ENCODE measurements at regions of chr5 and their contacts with region 1.

Region 1: DNA sequence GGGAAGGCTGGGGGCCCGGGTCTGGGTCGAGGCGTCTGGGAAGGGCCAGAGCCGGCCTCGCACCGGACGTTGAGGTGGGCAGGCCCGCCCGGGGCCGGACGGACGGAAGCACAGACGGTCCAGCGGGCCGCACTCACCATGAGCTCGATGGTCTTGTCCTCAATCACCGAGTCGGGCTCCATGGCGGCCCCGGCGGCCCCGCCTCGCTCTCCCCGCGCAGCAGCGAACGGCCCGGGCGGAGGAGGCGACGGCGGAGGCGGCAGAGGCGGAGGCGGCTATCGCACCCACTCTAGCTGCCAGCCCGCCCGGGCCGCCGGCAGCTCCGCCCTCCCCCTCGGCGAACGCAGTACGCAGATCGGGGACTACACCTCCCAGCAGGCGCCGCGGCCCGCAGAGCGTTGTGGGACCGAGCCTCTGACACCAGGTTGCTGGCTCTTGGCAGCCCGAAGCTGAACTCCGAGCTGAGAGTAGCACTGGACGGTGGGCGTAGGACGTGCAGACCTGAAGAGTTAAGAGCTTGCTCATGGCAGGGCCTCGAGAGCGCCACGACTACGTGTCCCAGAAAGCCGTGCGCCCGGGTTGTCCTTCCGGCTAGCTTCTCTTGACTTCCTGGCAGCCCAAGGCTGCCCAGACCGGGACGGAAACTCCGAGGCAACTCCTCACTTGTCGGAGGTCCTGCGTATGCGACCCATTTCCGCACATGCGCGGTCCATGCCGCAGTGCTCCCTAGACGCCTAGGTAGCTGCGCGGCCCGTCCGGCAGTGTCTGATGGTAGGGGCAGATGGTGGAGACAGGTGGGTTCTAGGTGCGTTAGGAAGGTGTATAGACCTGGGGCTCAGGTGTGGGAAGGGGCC is at the start of gene FBXW11:
- DNase-seq: peak; percentile 97
- ATAC-seq: peak; percentile 90
- H3K4me3 Mint-ChIP-seq: peak within 1 kb of the TSS; percentile 86
- H3K27ac Mint-ChIP-seq: peak within 1 kb of the TSS; percentile 96
- H3K4me1 Mint-ChIP-seq: peaks cover 47% of the 10 kb centered on the region
- H3K27me3 Mint-ChIP-seq: no peaks in the 10 kb centered on the region
- total RNA-seq, gene FBXW11: 26.3 to 27.1 TPM

Region 2: GRCh38 chr5:171418316-171418981 is 588.1 kb before region 1 on chr5:
- CTCF ChIA-PET with region 1: interaction called, 10 read pairs
- POLR2A ChIA-PET with region 1: no interaction called
- DNase-seq: peak; percentile 72
- ATAC-seq: peak; percentile 63
- H3K4me3 Mint-ChIP-seq: peak overlapping the region; percentile 63
- H3K27ac Mint-ChIP-seq: no peak overlapping the region
- H3K4me1 Mint-ChIP-seq: peaks cover 17% of the 10 kb centered on the region
- H3K27me3 Mint-ChIP-seq: peaks cover 24% of the 10 kb centered on the region

Region 3: GRCh38 chr5:171893290-171893886 is 113.2 kb before region 1 on chr5:
- CTCF ChIA-PET with region 1: no interaction called
- POLR2A ChIA-PET with region 1: no interaction called
- DNase-seq: no peak
- ATAC-seq: no peak
- H3K4me3 Mint-ChIP-seq: no peak overlapping the region
- H3K27ac Mint-ChIP-seq: no peak overlapping the region
- H3K4me1 Mint-ChIP-seq: peaks cover 12% of the 10 kb centered on the region
- H3K27me3 Mint-ChIP-seq: no peaks in the 10 kb centered on the region

Region 4: DNA sequence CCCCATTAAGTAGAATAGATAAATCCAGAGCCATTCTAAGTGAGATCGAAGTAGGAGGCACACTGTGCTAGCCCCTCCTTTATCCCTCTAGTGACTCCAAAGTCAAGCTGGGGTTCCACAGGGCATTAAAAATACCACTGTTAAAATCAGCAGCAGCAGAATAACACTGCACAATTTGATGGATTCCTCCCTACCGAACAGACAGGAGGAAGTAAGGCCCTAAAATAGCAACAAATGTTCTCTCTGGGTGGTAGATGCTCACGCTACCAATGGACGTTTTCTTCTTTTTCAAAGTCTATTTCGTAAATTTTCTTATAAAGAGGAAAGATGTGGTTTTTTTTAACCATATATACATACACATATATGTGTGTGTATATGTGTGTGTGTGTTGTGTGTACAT is 54.5 kb before region 1 on chr5:
- CTCF ChIA-PET with region 1: no interaction called
- POLR2A ChIA-PET with region 1: interaction called, 10 read pairs
- DNase-seq: no peak
- ATAC-seq: no peak
- H3K4me3 Mint-ChIP-seq: no peak overlapping the region
- H3K27ac Mint-ChIP-seq: no peak overlapping the region
- H3K4me1 Mint-ChIP-seq: peaks cover 18% of the 10 kb centered on the region
- H3K27me3 Mint-ChIP-seq: no peaks in the 10 kb centered on the region

Region 5: GRCh38 chr5:172035039-172035438 is 28.5 kb after region 1 on chr5:
- CTCF ChIA-PET with region 1: interaction called, 29 read pairs
- POLR2A ChIA-PET with region 1: interaction called, 4 read pairs
- DNase-seq: no peak
- ATAC-seq: peak; percentile 32
- H3K4me3 Mint-ChIP-seq: no peak overlapping the region
- H3K27ac Mint-ChIP-seq: no peak overlapping the region
- H3K4me1 Mint-ChIP-seq: peaks cover 11% of the 10 kb centered on the region
- H3K27me3 Mint-ChIP-seq: peaks cover 3% of the 10 kb centered on the region

Region 6: DNA sequence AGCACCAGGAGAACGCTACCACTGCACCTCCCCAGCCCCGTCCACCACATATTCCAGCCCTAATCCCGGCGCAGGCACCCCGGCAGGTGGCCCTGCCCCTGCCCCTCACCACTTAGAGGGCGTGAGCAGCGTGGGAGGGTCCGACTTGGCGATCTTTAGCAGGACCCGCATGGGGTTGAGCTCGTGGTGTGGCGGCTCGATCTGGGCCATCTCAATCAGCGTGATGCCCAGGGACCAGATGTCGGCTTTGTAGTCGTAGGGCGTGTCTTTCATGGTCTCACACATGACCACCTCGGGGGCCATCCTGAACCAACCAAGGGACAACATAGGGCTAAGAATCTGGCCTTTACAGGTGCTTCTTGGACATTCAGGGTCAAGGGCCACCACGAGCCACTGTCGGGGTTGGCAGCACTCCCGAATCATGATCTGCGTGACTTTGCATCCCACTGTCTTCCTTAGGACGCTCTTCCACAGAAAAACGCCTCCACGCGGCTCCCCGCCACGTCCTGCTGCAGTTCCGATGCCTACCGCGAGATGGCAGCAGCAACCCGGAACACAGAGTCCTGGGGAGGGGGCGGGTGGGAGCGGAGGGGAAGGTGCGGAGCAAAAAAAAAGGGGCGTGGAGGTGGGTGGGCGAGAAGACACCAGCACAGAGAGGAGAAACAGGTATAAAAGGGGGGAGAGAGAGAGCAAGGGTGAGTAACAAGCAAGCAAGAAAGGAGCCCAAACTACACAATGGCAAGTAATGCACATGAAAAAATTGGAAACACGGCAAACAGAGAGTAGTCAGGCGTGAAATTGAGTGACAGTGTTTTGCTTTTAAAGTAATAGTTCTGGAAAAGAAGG is 100.2 kb after region 1 on chr5:
- CTCF ChIA-PET with region 1: interaction called, 5 read pairs
- POLR2A ChIA-PET with region 1: interaction called, 10 read pairs
- DNase-seq: peak; percentile 65
- ATAC-seq: no peak
- H3K4me3 Mint-ChIP-seq: peak overlapping the region; percentile 22
- H3K27ac Mint-ChIP-seq: peak overlapping the region; percentile 67
- H3K4me1 Mint-ChIP-seq: peaks cover 64% of the 10 kb centered on the region
- H3K27me3 Mint-ChIP-seq: no peaks in the 10 kb centered on the region

Region 7: DNA sequence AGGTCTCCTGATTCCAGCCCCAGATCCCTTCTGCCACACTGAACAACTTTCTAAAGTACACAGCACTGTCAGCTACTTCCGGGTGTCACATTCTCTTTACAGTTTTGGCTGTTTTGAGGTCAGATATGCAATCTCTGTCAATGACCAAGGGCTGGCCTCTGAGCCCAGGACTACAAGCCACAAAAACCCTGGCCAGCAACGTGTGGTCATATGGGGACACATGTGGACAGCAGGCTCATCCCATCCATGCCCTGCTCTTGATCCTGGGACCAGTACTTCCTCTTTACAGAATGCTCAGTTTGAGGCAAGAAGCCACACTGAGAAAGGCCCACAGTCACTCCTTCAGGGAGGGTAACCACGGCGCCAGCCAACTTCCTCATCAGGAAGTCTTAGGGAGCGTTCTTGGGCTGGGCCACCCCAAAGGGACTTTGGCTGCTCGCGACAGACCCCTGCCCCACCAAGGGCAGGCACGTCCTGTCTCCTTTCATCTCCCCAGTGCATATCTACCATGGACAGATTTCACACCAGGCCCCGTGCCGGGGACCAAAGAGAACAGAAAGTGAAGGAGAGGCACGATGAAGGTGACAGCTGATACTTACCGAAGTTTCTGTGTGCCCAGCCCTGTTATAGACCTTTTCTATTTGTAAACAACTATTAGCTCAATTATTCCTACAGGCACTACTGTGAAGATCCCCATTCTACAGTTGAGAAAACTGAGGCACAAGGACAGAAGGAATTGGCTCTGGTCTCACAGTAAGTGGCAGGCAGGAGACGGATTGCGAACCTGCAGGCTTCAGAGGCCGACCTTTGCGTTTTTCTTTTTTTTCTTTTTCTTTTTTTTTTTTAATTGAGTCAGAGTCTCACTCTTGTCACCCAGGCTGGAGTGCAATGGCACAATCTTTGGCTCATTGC is 144.2 kb after region 1 on chr5:
- CTCF ChIA-PET with region 1: no interaction called
- POLR2A ChIA-PET with region 1: no interaction called
- DNase-seq: peak; percentile 49
- ATAC-seq: peak; percentile 80
- H3K4me3 Mint-ChIP-seq: peak overlapping the region; percentile 60
- H3K27ac Mint-ChIP-seq: peak overlapping the region; percentile 93
- H3K4me1 Mint-ChIP-seq: peaks cover 70% of the 10 kb centered on the region
- H3K27me3 Mint-ChIP-seq: no peaks in the 10 kb centered on the region

Region 8: DNA sequence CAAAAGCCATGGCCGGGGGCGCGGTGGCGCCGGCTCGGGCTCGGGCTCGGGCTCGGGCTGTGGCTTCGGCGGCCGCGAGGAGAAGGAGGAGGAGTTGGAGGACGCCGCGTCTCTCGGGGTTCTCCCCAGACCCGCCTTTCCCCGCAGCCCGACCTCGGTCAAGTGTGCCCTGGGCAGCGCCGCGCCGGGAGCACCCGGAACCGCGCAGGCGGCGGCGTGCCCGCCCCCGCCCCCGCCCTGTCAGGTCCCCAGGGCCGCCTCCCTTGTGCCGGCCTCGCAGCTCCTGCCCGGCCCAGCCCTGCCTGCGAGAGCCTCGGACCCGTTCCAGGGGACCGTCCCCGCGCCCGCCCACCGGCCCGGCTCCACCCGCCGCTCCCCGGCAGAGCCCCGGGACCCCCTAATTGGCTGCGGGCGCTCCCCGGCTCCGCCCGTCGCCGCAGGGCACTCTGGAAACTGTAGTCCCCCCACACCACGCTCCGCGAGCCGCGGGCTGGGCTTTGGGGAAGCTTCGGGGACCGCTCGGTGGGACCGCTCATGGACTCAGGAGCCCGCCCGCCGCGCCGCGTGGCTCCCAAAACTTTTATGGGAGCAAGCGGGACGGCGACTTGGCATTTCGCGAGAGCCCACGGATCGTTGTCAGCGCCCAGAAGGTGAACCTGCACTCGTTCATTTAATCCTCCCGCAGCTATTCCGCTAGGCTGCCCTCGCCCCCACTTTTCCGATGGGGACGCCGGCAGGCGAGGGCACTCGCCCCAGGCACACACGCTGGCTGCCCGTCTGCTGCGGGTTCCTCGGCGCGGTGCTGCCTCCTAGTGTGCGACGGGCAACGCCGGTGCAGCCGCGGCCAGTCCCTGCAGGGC is 181.7 kb after region 1 on chr5 and contains the start of gene STK10:
- CTCF ChIA-PET with region 1: interaction called, 15 read pairs
- POLR2A ChIA-PET with region 1: interaction called, 12 read pairs
- DNase-seq: peak; percentile 93
- ATAC-seq: peak; percentile 78
- H3K4me3 Mint-ChIP-seq: peak within 1 kb of the TSS; percentile 100
- H3K27ac Mint-ChIP-seq: peak within 1 kb of the TSS; percentile 96
- H3K4me1 Mint-ChIP-seq: peaks cover 30% of the 10 kb centered on the region
- H3K27me3 Mint-ChIP-seq: no peaks in the 10 kb centered on the region
- total RNA-seq, gene STK10: 294 to 299 TPM

Region 9: GRCh38 chr5:172207511-172207910 is 201.0 kb after region 1 on chr5:
- CTCF ChIA-PET with region 1: no interaction called
- POLR2A ChIA-PET with region 1: no interaction called
- DNase-seq: no peak
- ATAC-seq: no peak
- H3K4me3 Mint-ChIP-seq: no peak overlapping the region
- H3K27ac Mint-ChIP-seq: no peak overlapping the region
- H3K4me1 Mint-ChIP-seq: peaks cover 10% of the 10 kb centered on the region
- H3K27me3 Mint-ChIP-seq: no peaks in the 10 kb centered on the region